HEK293 (cell line): ENCODE measurements at regions of chr12 and their contacts with region 1.

Region 1: DNA sequence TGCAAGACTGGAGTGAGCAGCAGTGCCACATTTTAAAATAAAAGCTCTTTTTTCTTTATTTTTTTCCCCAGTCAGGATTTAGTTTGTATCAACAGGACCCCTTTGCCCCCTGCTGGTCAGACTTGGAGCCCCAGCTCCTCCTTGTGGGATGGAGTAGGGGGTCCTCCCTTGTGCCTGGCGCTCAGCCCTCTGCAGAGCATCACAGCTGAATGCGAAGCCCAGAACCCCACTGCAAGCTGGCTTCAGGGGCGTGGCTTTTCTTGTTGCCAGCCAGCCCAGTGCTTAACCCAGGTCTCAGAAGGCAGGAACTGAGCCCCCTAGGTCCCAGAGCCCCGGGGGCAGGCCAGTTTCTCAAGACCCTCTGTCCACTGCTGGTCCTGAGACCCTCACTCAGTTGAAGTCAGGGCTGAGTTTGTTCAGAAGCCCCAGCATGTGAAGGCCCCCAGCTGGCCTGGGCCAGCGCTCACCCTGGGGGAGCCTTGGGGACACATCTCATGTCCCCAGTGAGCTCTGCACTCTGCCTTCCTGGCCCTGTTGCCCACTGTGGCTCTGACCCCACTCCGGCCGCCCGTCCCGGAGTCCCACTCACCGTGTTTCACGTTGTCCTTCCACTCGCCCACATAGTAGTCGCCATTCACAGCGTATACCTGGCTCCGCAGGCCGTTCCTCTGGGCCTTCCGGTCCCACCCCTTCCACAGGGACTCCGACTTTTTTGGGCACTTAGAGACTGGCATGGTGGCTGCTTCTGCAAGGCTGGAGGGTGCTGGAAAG is 519 bp downstream of the MORN3 start:
- H3K4me3 ChIP-seq: no peak overlapping the region
- H3K27ac ChIP-seq: no peak overlapping the region
- H3K4me1 ChIP-seq: 0 out of 2 replicates have a peak, but pooled peaks cover 2% of the 10 kb centered on the region
- CTCF ChIP-seq: peak; percentile 38; the same call in 1 of the 2 replicates

Region 2: DNA sequence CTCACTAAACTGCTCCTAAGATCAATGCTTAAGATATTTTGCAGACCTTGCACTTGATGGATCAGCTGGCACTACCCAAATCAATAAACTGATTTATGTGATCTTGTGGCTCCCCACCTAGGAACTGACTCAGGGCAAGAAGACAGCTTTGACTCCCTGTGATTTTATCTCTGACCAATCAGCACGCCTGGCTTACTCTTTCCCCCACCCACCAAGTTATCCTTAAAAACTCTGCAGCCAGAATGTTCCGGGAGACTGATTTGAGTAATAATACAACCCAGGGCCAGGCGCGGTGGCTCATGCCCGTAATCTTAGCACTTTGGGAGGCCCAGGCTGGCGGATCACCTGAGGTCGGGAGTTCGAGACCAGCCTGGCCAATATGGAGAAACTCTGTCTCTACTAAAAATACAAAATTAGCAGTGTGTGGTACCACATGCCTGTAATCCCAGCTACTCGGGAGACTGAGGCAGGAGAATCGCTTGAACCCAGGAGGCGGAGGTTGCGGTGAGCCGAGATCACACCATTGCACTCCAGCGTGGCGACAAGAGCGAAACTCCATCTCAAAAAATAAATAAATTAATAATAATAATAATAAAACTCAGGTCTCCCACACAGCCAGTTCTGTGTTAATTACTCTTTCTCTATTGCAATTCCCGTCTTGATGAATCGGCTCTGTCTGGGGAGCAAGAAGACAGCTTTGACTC is 11.5 kb before region 1 on chr12:
- CTCF ChIA-PET with region 1: interaction called, 25 read pairs
- POLR2A ChIA-PET with region 1: interaction called, 3 read pairs
- H3K4me3 ChIP-seq: no peak overlapping the region
- H3K27ac ChIP-seq: no peak overlapping the region
- H3K4me1 ChIP-seq: no peaks in the 10 kb centered on the region
- CTCF ChIP-seq: no peak

Region 3: DNA sequence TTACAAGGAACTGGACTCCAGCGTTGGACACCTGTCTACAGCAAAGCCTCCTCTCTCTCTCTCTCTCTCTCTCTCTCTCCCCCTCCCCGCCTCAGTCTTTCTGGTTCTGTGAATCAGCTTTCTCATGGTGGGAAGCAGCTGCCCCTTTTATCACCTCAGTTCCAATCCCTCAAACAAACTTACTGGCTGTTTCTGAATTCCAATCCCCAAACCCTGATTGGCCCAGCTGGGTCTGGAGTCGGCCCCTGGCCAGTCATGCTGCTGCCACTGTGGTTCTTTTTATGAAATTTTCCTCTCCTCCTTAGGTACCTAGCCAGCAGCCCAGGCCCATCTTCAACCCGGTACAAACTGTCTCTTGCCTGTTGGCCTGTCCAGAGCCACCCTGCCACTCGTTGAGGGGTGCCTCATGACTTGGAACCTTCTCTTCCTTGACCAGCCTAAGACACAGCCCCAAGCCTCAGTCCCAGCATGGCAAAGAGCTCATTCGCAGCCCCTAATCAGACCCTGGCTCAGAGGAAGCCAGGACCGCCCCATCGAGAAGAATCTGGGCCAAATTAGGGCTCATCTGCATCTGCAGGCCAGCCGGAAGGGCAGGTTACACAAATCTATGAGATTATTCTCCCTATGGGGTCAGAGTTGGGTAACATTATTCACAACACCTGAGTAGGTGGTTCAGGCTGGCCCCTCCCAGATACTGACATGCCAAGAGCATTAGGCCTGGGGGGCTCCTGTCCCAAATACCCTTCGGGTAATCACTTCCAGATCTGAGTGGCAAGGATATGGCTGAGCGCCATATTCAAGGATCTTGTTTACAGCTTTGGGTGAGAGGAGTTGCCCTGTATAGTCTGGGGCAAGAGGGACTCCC is 10.0 kb after region 1 on chr12:
- CTCF ChIA-PET with region 1: interaction called, 15 read pairs
- POLR2A ChIA-PET with region 1: interaction called, 3 read pairs
- H3K4me3 ChIP-seq: no peak overlapping the region
- H3K27ac ChIP-seq: no peak overlapping the region
- H3K4me1 ChIP-seq: no peaks in the 10 kb centered on the region
- CTCF ChIP-seq: no peak

Region 4: GRCh38 chr12:121753844-121754264 is 84.9 kb after region 1 on chr12:
- CTCF ChIA-PET with region 1: no interaction called
- POLR2A ChIA-PET with region 1: no interaction called
- H3K4me3 ChIP-seq: no peak overlapping the region
- H3K27ac ChIP-seq: no peak overlapping the region
- H3K4me1 ChIP-seq: no peaks in the 10 kb centered on the region
- CTCF ChIP-seq: no peak